ENCODE measurements at regions of chr11 and their contacts with region 1.

Region 1: DNA sequence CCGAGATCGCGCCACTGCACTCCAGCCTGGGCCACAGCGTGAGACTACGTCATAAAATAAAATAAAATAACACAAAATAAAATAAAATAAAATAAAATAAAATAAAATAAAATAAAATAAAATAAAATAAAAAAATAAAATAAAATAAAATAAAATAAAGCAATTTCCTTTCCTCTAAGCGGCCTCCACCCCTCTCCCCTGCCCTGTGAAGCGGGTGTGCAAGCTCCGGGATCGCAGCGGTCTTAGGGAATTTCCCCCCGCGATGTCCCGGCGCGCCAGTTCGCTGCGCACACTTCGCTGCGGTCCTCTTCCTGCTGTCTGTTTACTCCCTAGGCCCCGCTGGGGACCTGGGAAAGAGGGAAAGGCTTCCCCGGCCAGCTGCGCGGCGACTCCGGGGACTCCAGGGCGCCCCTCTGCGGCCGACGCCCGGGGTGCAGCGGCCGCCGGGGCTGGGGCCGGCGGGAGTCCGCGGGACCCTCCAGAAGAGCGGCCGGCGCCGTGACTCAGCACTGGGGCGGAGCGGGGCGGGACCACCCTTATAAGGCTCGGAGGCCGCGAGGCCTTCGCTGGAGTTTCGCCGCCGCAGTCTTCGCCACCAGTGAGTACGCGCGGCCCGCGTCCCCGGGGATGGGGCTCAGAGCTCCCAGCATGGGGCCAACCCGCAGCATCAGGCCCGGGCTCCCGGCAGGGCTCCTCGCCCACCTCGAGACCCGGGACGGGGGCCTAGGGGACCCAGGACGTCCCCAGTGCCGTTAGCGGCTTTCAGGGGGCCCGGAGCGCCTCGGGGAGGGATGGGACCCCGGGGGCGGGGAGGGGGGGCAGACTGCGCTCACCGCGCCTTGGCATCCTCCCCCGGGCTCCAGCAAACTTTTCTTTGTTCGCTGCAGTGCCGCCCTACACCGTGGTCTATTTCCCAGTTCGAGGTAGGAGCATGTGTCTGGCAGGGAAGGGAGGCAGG is at the start of gene GSTP1:
- DNase-seq: peak; percentile 95 to 98
- ATAC-seq: peak; percentile 97
- H3K4me3 ChIP-seq: peak within 1 kb of the TSS; percentile 58 to 69
- H3K27ac ChIP-seq: peak within 1 kb of the TSS; percentile 80 to 95
- H3K4me1 ChIP-seq: no peaks in the 10 kb centered on the region
- H3K27me3 ChIP-seq: no peaks in the 10 kb centered on the region
- total RNA-seq, gene GSTP1: 371 to 432 TPM

Region 2: GRCh38 chr11:67401495-67402191 is 181.9 kb before region 1 on chr11 and contains the start of gene PPP1CA:
- intact Hi-C with region 1: loop called in 1 of 2 experiments (anchors 5 kb)
- DNase-seq: peak; percentile 94 to 97
- ATAC-seq: peak; percentile 95
- H3K4me3 ChIP-seq: peak within 1 kb of the TSS; percentile 60 to 66
- H3K27ac ChIP-seq: peak within 1 kb of the TSS in 1 of 2 donors; percentile 75
- H3K4me1 ChIP-seq: no peaks in the 10 kb centered on the region
- H3K27me3 ChIP-seq: no peaks in the 10 kb centered on the region
- total RNA-seq, gene PPP1CA: 61.7 to 64.8 TPM

Region 3: DNA sequence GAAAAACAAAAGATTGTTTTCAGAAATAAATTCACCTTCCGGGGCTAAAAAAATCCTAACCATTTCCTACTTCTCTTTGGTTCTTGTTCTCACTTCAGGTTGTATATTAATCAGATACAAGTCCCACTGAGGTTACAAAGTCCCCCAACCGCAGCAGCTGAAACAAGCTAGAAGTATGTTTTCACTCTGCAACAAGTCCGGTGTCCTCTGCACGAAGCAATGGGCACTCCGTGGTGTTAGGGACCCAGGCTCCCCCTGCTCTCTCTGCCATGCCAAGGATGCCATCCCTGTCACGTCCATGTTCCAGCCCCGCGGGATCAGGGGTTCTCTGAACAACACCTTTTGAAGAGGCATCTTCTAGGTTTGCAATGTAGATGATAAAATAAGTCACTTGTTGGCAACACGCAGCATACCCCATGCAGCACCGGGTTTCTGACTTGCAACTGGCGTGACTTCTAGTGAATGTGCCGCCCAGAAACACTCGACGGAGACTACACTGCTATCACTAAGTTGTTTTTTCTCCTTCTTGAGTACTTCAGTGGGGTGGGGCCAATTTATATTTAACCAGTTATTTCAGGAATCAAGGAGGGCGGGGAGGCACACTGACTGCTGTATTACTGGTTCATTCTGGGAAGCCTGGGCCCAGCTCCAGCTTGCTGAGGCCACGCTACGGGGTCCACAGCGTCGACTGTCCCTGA is 25.3 kb before region 1 on chr11:
- intact Hi-C with region 1: loop called in 1 of 2 experiments (anchors 1 kb)
- DNase-seq: peak; percentile 82 to 90
- ATAC-seq: peak; percentile 70
- H3K4me3 ChIP-seq: peak overlapping the region in 1 of 2 donors; percentile 18
- H3K27ac ChIP-seq: peak overlapping the region; percentile 52 to 90
- H3K4me1 ChIP-seq: peaks cover 0 to 3% of the 10 kb centered on the region in 2 donors
- H3K27me3 ChIP-seq: no peaks in the 10 kb centered on the region

Region 4: GRCh38 chr11:67656278-67656922 is 72.9 kb after region 1 on chr11:
- intact Hi-C with region 1: loop called (anchors 5 kb)
- DNase-seq: no peak
- ATAC-seq: no peak
- H3K4me3 ChIP-seq: no peak overlapping the region
- H3K27ac ChIP-seq: no peak overlapping the region
- H3K4me1 ChIP-seq: no peaks in the 10 kb centered on the region
- H3K27me3 ChIP-seq: no peaks in the 10 kb centered on the region